ENCODE measurements at regions of chr2 and their contacts with region 1.

Region 1: GRCh38 chr2:63514781-63515180 is 73.5 kb downstream of the WDPCP start:
- DNase-seq: no peak
- H3K4me3 ChIP-seq: no peak overlapping the region
- CTCF ChIP-seq: no peak
- POLR2A ChIP-seq: no peak

Region 2: DNA sequence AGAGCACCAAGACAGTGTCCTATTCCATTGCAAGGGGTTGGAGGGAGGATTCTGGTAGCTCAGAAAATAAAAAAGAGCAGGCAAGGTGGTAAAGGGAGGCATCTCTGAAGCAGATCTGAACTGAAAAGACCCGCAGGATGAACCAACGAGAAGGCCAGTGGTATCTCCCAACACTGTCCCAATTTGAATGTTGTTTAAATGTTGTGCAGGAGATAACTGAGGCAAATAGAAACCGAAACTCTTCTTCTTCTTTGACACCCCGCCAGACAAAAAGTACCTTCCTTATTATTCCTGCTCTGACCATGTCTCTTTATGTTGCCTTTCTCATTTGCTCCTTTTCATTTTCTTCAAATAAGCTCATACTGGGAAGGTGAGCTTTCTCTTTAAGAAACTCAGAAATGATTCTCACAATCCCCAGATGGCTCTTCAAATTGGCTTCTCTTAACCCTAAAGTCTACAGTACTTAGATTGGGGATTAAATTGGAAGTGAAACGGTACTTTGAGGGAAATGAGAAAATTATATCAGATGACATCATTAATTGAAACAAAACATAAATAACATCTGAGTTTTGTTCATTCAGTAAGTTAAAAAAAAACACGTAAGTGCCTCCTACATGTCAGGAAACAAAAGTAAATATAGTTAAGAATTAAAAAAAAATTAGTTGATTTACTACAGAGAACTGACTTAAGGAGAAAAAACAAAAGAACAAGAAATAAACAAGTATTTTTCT is 70.1 kb before region 1 on chr2:
- intact Hi-C with region 1: loop called (anchors 10 kb)
- DNase-seq: no peak
- H3K4me3 ChIP-seq: no peak overlapping the region
- CTCF ChIP-seq: no peak
- POLR2A ChIP-seq: no peak